KBM-7 (cell line): ENCODE measurements at regions of chr18 and their contacts with region 1.

Region 1: GRCh38 chr18:32158108-32158624 is 31.7 kb upstream of the MEP1B start:
- DNase-seq: peak; percentile 87

Region 2: GRCh38 chr18:31596081-31596872 is 561.9 kb before region 1 on chr18:
- in situ Hi-C with region 1: no loop called
- DNase-seq: no peak

Region 3: DNA sequence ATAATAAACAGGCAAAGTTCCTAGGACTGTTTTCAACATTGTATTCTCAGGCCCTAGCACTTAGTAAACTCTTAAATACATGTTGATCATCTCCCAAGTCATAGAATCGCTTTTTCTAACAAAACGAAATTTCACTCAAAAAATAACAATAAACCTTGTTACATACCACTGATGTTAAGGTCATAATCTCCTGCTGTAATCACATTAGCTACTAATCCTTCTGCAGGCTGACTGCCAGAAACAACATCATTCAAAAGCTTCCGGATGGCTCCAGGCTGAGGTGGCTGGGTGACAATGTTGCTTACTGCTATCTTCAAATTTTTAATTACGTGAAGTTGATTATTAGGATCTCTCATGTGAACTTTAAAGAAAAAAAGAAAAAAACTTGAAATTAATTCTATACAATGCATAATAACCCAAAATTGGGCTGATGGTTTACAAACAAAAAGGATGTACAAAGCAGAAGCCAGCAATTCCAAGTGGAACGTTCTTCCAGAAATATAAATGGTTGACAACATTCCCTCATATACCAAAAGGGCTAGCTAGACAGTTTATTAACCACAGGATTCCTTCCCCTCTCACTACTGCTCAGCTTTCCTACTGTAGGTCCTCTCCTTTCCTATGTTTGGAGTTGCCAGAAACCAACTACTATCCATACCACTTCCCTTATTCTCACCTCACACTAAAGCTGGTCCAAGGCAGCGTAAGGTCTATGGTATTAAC is 226.8 kb before region 1 on chr18:
- in situ Hi-C with region 1: no loop called
- DNase-seq: no peak

Region 4: DNA sequence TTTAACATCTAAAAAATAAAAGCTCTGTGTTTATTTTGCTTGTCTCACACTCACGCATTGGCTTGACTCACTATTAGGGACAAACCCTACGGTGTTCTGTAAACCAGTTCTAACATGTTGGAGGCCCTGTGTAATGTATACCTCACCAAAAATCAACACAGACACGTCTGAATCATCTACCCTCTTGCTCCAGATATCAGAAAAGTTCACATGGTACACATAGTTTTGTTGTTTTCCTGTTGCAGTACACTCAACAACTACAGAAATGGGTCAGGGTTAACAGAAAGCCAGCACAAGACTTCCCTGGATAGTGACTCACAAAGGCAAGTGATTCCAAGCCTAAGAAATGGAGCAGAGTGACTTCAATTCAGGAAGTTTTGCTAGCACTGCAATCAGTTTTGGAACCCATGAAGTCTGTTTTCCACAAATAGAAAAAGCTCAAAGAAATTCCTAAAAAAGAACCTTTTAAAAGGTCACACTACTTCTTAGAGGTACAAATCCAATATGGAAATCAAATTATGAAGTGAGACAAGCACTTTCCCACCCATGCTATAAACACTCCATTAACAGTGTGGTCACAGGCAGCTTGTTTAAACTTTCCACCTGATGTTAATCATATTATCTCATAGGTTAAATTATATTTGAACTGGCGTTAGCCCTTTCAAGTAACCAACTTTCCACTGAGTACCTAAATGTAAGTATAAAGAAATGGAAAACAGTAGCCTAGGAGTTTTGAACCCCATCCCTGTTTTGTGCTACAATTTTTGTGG is 225.1 kb after region 1 on chr18:
- in situ Hi-C with region 1: no loop called
- DNase-seq: no peak

Region 5: DNA sequence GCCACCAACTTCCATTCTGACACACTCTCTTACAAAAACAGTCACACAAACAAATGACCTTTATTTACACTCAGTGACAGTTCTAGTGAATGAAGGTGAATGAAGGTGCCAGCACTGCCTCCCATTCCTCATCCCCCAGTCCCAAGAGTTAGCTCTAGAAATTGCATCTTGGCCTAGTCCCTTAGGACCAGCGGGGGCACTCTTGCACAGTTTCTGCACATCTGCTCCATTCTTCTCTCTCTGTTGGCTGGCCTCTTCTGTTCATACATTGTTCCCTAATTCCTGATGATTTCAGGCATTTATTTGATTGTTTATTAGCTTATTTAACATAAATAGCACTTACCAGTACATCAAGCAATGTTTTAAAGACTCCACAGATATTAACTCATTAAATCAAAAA is 281.6 kb after region 1 on chr18:
- in situ Hi-C with region 1: no loop called
- DNase-seq: no peak

Region 6: GRCh38 chr18:32552421-32553030 is 394.4 kb after region 1 on chr18:
- in situ Hi-C with region 1: loop called (anchors 25 kb)
- DNase-seq: peak; percentile 65